Heart left ventricle (tissue), 16 donors: ENCODE measurements at regions of chr14 and their contacts with region 1.

Region 1: DNA sequence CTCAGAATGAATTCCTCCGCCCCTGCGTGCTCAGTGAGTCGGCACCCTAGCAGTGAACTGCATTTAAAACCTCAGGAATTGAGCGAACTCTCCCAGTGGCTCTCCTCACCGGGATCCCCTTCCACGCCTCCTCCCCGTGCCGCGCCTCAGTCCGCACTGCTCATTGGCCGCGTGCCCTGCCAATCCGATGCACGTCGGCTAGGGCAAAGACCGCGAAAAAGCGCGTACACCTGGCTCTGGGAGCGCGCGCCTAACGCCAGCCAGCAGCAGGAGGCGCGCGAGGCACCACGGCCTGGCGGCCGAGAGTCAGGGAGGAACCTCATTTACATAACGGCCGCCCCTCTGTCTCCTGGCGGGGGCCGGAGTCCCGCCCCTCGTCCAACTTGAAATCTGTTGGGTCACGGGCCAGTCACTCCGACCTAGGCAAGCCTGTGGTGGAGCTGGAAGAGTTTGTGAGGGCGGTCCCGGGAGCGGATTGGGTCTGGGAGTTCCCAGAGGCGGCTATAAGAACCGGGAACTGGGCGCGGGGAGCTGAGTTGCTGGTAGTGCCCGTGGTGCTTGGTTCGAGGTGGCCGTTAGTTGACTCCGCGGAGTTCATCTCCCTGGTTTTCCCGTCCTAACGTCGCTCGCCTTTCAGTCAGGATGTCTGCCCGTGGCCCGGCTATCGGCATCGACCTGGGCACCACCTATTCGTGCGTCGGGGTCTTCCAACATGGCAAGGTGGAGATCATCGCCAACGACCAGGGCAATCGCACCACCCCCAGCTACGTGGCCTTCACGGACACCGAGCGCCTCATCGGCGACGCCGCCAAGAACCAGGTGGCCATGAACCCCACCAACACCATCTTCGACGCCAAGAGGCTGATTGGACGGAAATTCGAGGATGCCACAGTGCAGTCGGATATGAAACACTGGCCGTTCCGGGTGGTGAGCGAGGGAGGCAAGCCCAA is at the start of gene HSPA2:
- DNase-seq: peak; percentile 99
- ATAC-seq: peak; percentile 97 to 99 (median 98)
- H3K4me3 ChIP-seq: peak within 1 kb of the TSS; percentile 47 to 77 (median 69)
- H3K27ac ChIP-seq: peak within 1 kb of the TSS; percentile 46 to 90 (median 80)
- H3K4me1 ChIP-seq: peaks cover 0 to 34% (median 10%) of the 10 kb centered on the region in 12 donors
- H3K27me3 ChIP-seq: peaks cover 0 to 24% (median 0%) of the 10 kb centered on the region in 9 donors
- CTCF ChIP-seq: peak; percentile 72 to 100 (median 82)
- POLR2A ChIP-seq: peak; percentile 93 to 98
- total RNA-seq, gene HSPA2: 9.6 to 96.0 (median 22.9) TPM

Region 2: DNA sequence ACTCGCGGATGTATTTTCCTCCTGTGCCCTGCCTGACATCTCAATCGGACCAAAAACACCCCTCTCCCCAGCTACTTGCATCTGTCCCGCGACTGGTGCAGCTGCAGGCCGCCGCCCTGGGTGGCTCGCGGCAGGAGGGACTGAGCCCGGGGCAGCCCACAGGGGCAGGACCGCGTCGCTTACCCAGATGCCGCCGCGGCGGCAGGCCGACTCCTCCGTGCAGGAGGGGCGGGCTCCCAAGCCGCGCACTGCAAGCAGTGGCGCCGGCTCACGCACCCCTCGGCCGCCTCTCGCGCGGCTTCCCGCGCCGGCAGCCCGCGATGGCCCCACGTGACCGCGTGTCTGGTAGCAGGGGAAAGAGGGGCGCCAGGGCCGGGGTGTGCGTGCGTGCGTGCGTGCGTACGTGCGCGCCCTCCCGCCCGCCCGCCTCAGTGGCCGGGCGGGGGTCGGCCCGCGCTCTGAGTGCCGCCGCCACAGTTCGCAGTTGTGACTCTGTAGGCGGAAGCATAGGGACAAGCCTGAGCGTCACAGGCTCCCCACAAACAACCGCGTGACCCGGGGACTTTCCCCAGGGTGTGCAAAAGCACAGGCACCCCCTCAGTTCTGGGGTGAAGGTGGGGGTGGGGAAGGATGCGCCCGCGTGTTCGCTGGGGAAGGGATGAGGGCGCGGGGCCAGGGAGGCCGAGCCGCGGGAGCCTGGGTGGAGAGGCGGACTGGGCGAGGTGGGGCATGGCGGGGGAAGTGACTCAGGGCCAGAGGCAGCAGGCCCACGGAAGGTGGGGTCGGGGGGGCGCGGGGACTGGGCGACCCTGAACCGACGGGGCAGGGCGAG is 36.8 kb before region 1 on chr14 and contains the start of gene ZBTB25:
- intact Hi-C with region 1: loop called in 2 of 10 experiments (anchors 1 to 2 kb)
- DNase-seq: peak; percentile 87 to 95 (median 93)
- ATAC-seq: peak; percentile 76 to 90 (median 82)
- H3K4me3 ChIP-seq: peak within 1 kb of the TSS; percentile 68 to 97 (median 89)
- H3K27ac ChIP-seq: peak within 1 kb of the TSS; percentile 96 to 100 (median 98)
- H3K4me1 ChIP-seq: peaks cover 8 to 74% (median 56%) of the 10 kb centered on the region in 12 donors
- H3K27me3 ChIP-seq: no peaks in the 10 kb centered on the region
- CTCF ChIP-seq: peak in 1 of 12 donors; percentile 15
- POLR2A ChIP-seq: peak in 1 of 2 donors; percentile 90
- total RNA-seq, gene ZBTB25: 12.5 to 28.0 (median 19.0) TPM

Region 3: GRCh38 chr14:64569184-64569631 is 28.7 kb after region 1 on chr14:
- intact Hi-C with region 1: loop called in 2 of 10 experiments (anchors 2 kb)
- DNase-seq: peak in 4 of 5 donors; percentile 51 to 84 (median 62)
- ATAC-seq: peak; percentile 91 to 97 (median 96)
- H3K4me3 ChIP-seq: no peak overlapping the region
- H3K27ac ChIP-seq: peak overlapping the region; percentile 26 to 78 (median 65)
- H3K4me1 ChIP-seq: peaks cover 0 to 40% (median 18%) of the 10 kb centered on the region in 12 donors
- H3K27me3 ChIP-seq: no peaks in the 10 kb centered on the region
- CTCF ChIP-seq: no peak
- POLR2A ChIP-seq: no peak

Region 4: GRCh38 chr14:64636208-64636979 is 95.9 kb after region 1 on chr14:
- intact Hi-C with region 1: loop called (anchors 1 to 5 kb)
- DNase-seq: peak; percentile 59 to 77 (median 72)
- ATAC-seq: peak; percentile 82 to 91 (median 90)
- H3K4me3 ChIP-seq: no peak overlapping the region
- H3K27ac ChIP-seq: peak overlapping the region in 1 of 12 donors; percentile 33
- H3K4me1 ChIP-seq: peaks cover 0 to 9% (median 0%) of the 10 kb centered on the region in 12 donors
- H3K27me3 ChIP-seq: no peaks in the 10 kb centered on the region
- CTCF ChIP-seq: peak; percentile 84 to 97 (median 89)
- POLR2A ChIP-seq: no peak

Region 5: GRCh38 chr14:64764641-64765520 is 224.4 kb after region 1 on chr14:
- intact Hi-C with region 1: loop called in 1 of 10 experiments (anchors 10 kb)
- DNase-seq: peak; percentile 68 to 83 (median 74)
- ATAC-seq: peak in 3 of 4 donors; percentile 54 to 66 (median 65)
- H3K4me3 ChIP-seq: peak overlapping the region in 7 of 12 donors; percentile 27 to 45 (median 33)
- H3K27ac ChIP-seq: peak overlapping the region in 9 of 12 donors; percentile 16 to 87 (median 78)
- H3K4me1 ChIP-seq: peaks cover 0 to 48% (median 39%) of the 10 kb centered on the region in 12 donors
- H3K27me3 ChIP-seq: no peaks in the 10 kb centered on the region
- CTCF ChIP-seq: peak; percentile 68 to 95 (median 86)
- POLR2A ChIP-seq: no peak